Vagina (tissue), 2 donors: ENCODE measurements at regions of chrX and their contacts with region 1.

Region 1: GRCh38 chrX:989959-990510 is 222.4 kb downstream of the CRLF2 start:
- DNase-seq: peak in 1 of 2 donors; percentile 97
- H3K4me3 ChIP-seq: peak overlapping the region; percentile 39 to 42
- H3K27ac ChIP-seq: peak overlapping the region; percentile 53
- H3K4me1 ChIP-seq: peaks cover 13% of the 10 kb centered on the region
- H3K27me3 ChIP-seq: no peaks in the 10 kb centered on the region
- CTCF ChIP-seq: no peak
- POLR2A ChIP-seq: no peak

Region 2: DNA sequence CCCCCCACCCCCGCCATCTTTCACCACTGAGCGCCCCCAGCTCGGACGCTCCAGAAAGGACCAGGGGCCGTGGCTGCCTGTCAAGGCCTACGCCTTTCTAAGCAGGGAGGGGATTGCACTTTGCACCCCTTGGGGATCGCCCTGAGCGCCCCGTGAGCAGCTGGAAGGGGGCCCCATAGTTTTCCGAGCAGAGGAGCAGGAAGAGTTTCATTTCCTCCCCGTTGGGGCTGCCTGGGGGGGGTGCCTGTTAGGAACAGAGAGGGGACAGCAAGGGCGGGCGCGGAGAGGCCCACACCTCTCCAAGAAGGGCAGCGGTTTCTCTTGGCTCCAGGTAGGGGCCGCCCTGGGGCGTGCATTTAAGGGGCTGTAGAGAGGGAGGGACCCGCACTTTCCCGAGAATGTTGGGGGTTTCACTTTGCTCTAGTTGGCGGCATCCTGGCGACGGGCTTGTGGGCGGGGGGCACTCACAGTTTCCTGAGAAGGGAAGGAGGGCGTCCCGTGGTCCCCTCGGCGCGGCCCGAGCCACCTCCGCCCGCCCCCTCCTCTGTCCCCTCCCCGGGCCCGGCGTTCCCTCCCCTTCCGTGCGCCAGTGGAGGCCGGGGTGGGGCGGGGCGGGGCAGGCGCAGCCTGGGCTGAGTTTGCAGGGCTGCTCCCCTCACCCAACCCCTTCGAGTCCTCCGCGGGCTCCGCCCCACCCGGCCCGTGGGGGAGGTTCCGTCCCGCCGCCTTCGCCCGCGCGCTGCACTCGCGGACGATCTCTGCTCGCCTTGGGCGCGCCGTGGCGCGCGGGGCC is 1618.8 kb after region 1 on chrX:
- intact Hi-C with region 1: loop called (anchors 10 kb)
- DNase-seq: no peak
- H3K4me3 ChIP-seq: peak overlapping the region; percentile 82 to 95
- H3K27ac ChIP-seq: peak overlapping the region; percentile 81
- H3K4me1 ChIP-seq: peaks cover 33% of the 10 kb centered on the region
- H3K27me3 ChIP-seq: no peaks in the 10 kb centered on the region
- CTCF ChIP-seq: no peak
- POLR2A ChIP-seq: peak in 1 of 2 donors; percentile 21

Region 3: DNA sequence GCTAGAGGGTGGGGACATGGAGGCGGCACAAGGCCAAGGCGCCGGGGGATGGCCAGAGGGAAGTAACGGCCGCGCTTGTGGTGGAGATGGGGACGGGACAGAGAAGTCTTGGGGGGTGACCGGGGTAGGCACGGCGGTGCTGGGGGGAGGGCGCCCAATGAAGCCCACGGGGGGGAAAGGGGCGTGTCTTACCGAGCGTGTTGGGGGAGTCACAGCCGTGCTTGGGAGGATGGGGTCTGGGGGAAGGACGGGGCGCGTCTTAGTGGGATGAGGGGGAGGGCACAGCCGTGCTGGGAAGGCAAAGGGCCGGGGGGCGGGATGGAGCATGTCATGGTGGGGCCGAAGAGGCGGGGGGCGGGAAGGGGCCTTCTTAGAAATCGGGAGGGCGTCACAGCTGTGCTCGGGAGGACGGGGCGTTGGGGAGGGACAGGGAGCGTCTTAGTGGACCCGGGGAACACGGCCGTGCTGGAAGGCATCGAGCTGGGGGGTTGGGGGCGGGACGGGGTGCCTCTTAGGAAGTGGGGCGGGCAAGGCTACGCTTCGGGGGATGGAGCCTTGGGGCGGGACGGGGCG is 1938.2 kb after region 1 on chrX:
- intact Hi-C with region 1: no loop called
- DNase-seq: peak in 1 of 2 donors; percentile 92
- H3K4me3 ChIP-seq: peak overlapping the region; percentile 71 to 83
- H3K27ac ChIP-seq: peak overlapping the region; percentile 95
- H3K4me1 ChIP-seq: peaks cover 5% of the 10 kb centered on the region
- H3K27me3 ChIP-seq: no peaks in the 10 kb centered on the region
- CTCF ChIP-seq: no peak
- POLR2A ChIP-seq: no peak